ENCODE measurements at regions of chr14 and their contacts with region 1.

Region 1: DNA sequence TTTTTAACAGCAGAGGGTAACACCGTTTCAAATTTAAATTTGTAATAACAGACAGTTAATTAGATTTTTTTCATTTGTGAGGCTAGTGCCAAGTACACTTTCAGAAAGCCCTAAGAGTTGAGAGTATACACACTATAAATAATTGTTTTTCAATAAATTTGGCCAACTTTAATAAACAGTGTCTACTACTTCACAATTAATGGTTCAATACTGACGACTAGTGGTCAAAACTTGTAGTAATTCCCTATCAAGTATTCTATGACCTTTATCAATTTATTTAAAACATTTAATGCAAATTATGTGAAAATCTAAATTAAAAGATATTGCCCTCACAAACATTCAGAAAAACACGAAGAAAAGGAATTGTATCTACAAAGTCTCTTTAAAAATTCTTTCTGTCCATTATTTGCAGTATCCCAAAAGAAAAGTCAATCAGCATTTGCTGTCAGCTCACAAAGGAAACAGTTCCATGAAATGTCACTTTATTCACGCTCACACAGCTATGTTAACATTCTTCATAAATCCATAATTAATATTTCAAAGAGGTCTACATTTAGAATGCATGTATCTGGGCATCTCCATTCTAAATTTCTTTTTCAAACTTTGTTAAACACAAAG is 91.2 kb downstream of the CEP128 start:
- DNase-seq: peak; percentile 41
- H3K4me3 ChIP-seq: no peak overlapping the region
- H3K27ac ChIP-seq: no peak overlapping the region
- H3K4me1 ChIP-seq: no peaks in the 10 kb centered on the region
- CTCF ChIP-seq: peak; percentile 91

Region 2: DNA sequence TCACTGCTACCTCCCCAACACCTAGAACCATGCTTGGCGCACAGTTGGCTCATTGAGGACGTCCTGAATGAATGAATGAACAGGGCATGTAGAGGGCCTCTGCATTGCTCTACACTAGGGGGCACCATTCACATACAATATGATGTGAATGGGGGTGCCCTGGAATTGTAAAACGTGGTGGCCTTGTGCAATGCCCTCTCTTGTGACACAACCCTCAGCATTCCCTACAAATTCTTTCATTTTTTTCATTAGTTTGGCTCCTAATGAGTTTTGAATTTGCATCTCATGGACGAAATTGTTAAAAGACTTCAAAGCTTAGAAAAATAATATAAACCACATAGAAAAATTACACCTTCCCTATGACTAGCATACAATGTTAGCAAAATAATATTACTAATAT is 636.7 kb before region 1 on chr14:
- CTCF ChIA-PET with region 1: no interaction called
- POLR2A ChIA-PET with region 1: no interaction called
- intact Hi-C with region 1: loop called (anchors 10 kb)
- DNase-seq: peak; percentile 49
- H3K4me3 ChIP-seq: no peak overlapping the region
- H3K27ac ChIP-seq: no peak overlapping the region
- H3K4me1 ChIP-seq: no peaks in the 10 kb centered on the region
- CTCF ChIP-seq: peak; percentile 76

Region 3: GRCh38 chr14:80718940-80719339 is 131.4 kb before region 1 on chr14:
- CTCF ChIA-PET with region 1: no interaction called
- POLR2A ChIA-PET with region 1: no interaction called
- intact Hi-C with region 1: no loop called
- DNase-seq: no peak
- H3K4me3 ChIP-seq: no peak overlapping the region
- H3K27ac ChIP-seq: no peak overlapping the region
- H3K4me1 ChIP-seq: no peaks in the 10 kb centered on the region
- CTCF ChIP-seq: no peak